ENCODE measurements at regions of chr19 and their contacts with region 1.

Region 1: GRCh38 chr19:48110350-48110966 is at the start of gene PLA2G4C:
- H3K4me3 ChIP-seq: peak within 1 kb of the TSS; percentile 57
- H3K27ac ChIP-seq: peak within 1 kb of the TSS; percentile 80
- H3K4me1 ChIP-seq: 0 out of 2 replicates have a peak, but pooled peaks cover 6% of the 10 kb centered on the region
- CTCF ChIP-seq: no peak

Region 2: DNA sequence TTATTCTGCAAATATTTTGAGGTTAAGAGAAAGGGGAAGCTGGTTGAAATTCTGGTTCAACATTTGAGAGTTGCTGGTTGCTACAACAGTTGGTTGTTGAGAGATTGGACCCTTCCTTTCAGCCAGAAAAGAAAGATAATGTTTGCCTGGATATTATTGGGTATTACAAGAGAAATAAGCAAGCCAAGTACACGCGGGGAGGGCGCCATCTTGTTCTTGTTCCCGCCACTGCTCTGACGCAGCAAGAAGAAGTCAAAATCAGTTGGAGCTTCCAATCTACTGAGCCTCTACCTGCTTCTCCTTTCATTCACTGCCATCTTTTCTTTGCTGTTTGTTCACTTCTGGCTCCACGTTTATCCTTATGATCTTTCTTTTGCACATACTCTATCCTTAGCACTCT is 136.9 kb before region 1 on chr19:
- CTCF ChIA-PET with region 1: interaction called, 276 read pairs
- POLR2A ChIA-PET with region 1: no interaction called
- H3K4me3 ChIP-seq: no peak overlapping the region
- H3K27ac ChIP-seq: no peak overlapping the region
- H3K4me1 ChIP-seq: no peaks in the 10 kb centered on the region
- CTCF ChIP-seq: no peak

Region 3: DNA sequence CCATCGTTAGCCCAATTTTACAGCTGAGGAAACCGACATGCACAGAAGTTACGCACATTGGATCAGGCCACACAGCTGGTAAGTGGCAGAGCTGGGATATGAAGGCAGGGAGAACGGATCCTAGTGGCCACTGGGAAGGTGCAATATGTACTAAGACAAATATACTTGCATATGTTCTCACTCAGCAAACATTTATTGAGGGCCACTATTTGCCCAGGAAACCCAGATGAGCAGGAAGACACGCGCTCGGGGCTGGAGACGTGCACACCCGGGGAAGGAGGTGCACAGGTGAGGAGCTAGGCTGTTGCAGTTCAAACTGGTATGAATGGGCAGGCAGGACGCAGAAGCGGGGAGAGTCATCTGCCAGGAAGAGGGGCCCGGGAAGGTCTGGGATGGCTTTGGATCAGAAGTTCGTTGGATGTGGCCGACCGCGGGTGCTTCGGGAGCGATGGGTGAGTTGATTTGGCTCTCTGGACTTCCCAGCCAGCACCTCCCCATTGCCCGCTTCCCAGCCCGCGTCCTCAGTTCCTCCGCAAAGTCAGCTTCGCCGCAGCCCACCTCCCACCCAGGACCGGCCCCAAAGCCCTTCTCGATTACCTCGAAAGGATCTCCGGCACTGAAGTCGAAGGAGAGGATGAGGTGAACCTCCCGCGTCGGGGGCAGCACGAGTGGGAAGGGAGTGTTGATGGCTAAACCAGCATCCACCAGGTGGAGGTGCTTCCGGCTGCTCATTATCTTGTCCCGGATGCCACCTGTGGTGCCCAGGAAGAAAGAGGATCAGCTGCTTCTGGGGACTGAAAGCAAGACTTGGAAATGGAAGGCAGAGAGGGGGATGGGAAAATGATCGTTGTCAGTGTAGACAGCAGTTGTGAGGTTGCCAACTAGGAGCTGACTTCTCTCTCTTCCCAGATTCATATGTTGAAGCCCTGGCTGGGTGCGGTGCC is 48.8 kb before region 1 on chr19:
- CTCF ChIA-PET with region 1: no interaction called
- POLR2A ChIA-PET with region 1: no interaction called
- H3K4me3 ChIP-seq: no peak overlapping the region
- H3K27ac ChIP-seq: no peak overlapping the region
- H3K4me1 ChIP-seq: no peaks in the 10 kb centered on the region
- CTCF ChIP-seq: no peak

Region 4: GRCh38 chr19:48085076-48085475 is 25.4 kb before region 1 on chr19:
- CTCF ChIA-PET with region 1: no interaction called
- POLR2A ChIA-PET with region 1: no interaction called
- H3K4me3 ChIP-seq: no peak overlapping the region
- H3K27ac ChIP-seq: no peak overlapping the region
- H3K4me1 ChIP-seq: no peaks in the 10 kb centered on the region
- CTCF ChIP-seq: no peak

Region 5: GRCh38 chr19:48095612-48096175 is 14.8 kb before region 1 on chr19:
- CTCF ChIA-PET with region 1: interaction called, 10 read pairs
- POLR2A ChIA-PET with region 1: interaction called, 9 read pairs
- H3K4me3 ChIP-seq: no peak overlapping the region
- H3K27ac ChIP-seq: no peak overlapping the region
- H3K4me1 ChIP-seq: no peaks in the 10 kb centered on the region
- CTCF ChIP-seq: no peak

Region 6: DNA sequence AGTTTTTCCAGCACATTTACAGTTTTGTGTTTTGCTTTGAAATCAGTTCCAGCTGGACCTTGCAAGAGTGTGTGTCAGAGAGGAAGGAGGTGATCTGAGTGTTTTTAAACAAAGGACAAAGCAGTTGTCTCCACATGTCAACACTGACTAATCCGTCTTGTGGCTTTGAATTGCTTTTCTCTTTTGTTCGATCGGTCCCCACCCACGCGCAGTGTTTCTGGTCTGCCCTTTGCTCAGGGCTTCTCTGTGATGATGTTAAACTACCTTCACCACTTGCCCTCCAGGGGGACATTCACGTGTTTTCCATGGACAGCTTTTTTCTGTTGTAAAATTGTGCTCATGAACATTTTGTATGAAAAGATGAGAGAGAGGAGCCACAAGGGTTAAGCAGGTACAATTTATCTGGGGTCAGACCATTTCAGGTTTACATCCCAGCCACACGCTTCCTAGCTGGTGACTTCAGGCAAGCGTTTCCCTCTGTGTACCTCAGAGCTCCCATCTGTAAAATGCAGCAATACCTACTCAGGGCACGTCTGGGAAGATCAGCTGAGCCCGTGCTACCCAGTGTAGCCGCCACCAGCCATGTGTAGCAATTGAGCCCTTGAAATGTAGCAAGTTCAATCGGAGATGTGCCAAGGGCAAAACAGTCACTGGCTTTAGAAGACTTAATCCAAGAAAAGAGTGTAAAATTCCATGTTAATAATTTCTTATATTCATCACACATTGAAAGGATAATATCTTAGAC is 13.6 kb after region 1 on chr19:
- CTCF ChIA-PET with region 1: interaction called, 11 read pairs
- POLR2A ChIA-PET with region 1: interaction called, 6 read pairs
- H3K4me3 ChIP-seq: no peak overlapping the region
- H3K27ac ChIP-seq: no peak overlapping the region
- H3K4me1 ChIP-seq: no peaks in the 10 kb centered on the region
- CTCF ChIP-seq: no peak

Region 7: GRCh38 chr19:48152551-48152950 is 42.1 kb after region 1 on chr19:
- CTCF ChIA-PET with region 1: interaction called, 36 read pairs
- POLR2A ChIA-PET with region 1: interaction called, 7 read pairs
- H3K4me3 ChIP-seq: no peak overlapping the region
- H3K27ac ChIP-seq: no peak overlapping the region
- H3K4me1 ChIP-seq: no peaks in the 10 kb centered on the region
- CTCF ChIP-seq: peak; percentile 36; the same call in 1 of the 2 replicates

Region 8: DNA sequence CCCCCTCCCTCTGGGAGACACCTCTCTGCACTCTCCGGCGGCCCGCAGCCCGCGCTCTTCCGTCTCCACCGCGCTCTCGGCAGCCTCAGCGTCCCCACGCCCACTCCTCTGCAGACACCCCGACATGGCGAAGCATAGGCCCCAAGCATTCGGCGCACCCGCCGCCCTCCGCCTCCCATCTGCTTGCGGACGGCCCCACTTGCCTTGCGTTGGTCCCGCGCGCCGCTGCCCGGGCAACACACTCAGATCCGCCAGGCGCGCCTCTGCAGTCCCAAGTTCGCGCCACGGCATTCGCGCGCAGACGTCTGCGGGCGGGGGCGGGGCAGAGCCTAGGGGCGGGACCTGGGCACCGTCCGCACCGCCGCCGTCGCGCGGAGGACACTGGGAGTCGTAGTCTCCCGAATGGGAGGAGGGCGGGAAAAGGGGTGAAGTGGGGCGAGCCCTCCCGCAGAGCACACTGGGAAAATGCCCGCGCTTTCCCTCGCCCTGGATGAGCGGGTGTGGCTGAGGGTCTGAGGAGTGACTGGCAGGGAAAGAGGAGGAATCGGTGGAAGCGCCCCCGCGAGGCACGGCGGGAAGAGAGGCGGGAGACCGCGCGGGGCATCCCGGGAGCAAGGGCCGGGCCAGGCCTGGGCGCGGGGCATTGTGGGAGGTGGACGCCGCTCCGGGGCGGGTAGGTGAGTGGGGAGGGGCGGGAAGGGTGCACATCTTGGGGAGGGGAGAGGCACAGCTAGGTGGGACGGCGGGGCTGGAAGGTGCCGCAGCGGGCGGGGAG is 59.8 kb after region 1 on chr19 and contains the starts of genes LIG1 and ZSWIM9:
- CTCF ChIA-PET with region 1: interaction called, 3 read pairs
- POLR2A ChIA-PET with region 1: interaction called, 20 read pairs
- H3K4me3 ChIP-seq: peak within 1 kb of the TSS; percentile 98
- H3K27ac ChIP-seq: peak within 1 kb of the TSS; percentile 99
- H3K4me1 ChIP-seq: peaks cover 13% of the 10 kb centered on the region
- CTCF ChIP-seq: peak; percentile 87

Region 9: GRCh38 chr19:48203732-48204628 is 93.5 kb after region 1 on chr19:
- CTCF ChIA-PET with region 1: interaction called, 5 read pairs
- POLR2A ChIA-PET with region 1: interaction called, 17 read pairs
- H3K4me3 ChIP-seq: peak overlapping the region; percentile 63
- H3K27ac ChIP-seq: peak overlapping the region; percentile 37
- H3K4me1 ChIP-seq: peaks cover 5% of the 10 kb centered on the region; the same call in 1 of the 2 replicates
- CTCF ChIP-seq: no peak

Measured in HEK293 (cell line).